ENCODE measurements at regions of chr9 and their contacts with region 1.

Region 1: DNA sequence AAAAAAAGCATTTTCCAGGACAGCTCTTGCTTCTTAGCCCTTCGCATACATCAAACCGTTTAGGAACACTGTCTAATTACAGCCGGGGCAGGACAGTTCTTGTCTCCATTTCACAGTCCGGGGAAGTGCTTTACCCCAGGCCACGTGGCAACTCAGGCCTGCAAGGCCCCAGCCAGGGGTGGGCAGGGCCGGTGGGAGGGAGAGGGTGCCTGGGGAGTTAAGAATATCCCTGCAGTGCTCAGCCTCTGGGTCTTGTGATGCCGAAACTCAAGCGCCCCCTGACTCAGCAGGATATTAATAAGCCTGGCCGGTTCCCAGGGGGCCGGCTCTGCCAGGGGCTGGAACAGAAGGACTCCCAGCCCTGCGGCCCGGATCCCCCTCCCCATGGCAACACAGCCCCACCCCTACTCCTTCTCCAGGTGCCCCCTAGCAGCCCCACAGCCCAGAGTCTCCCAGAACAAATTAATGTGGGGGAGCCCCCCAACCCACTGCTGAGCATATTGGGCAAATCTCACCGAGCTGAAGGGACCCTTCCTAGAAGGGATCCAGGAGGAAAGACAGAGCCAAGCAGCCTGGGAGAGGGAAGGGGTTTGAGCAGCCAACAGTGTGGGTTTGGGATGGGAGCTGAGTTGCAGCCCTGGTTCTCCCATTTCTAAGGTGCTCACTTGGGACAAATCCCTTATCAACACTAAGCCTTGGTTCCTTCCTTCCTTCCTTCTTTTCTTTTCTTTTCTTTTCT is 45.3 kb downstream of the PLPP7 start:
- DNase-seq: peak; percentile 64
- H3K4me3 ChIP-seq: no peak overlapping the region
- H3K27ac ChIP-seq: no peak overlapping the region
- H3K4me1 ChIP-seq: peaks cover 0 to 5% (median 0%) of the 10 kb centered on the region in 4 donors
- H3K27me3 ChIP-seq: no peaks in the 10 kb centered on the region
- CTCF ChIP-seq: no peak
- EP300 ChIP-seq: no peak
- POLR2A ChIP-seq: no peak

Region 2: DNA sequence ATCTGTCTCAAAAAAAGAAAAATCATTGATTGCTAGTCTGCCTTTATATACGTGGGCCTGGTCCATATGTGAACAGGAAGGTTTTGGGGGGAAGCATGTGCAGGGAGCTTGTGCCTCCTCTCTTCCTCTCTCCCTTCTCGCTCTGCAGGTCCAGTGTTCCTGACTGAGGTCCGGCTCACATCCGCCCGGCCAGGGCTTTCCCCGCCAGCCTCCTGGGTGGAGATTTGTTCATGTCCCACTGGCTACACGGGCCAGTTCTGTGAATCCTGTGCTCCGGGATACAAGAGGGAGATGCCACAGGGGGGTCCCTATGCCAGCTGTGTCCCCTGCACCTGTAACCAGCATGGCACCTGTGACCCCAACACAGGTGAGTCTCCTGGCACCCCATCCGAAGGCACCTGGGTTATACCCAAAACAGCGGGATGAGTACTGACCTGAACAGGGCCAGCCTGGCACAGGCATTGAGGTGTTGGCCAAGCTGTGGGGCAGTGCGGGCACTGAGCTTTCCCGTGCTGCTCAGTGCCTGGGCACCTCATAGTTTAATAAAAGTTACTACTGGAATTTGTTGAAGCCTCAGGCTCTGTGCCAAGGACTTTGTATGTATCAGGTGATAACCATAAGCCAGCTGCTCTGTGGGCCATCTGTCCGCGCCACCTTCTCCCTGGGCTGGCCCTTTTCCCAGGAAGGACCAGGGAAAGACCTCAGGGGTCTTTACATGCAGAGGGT is 277.9 kb before region 1 on chr9:
- intact Hi-C with region 1: loop called (anchors 1 kb)
- DNase-seq: no peak
- H3K4me3 ChIP-seq: no peak overlapping the region
- H3K27ac ChIP-seq: no peak overlapping the region
- H3K4me1 ChIP-seq: no peaks in the 10 kb centered on the region
- H3K27me3 ChIP-seq: peaks cover 0 to 9% (median 0%) of the 10 kb centered on the region in 3 donors
- CTCF ChIP-seq: no peak
- EP300 ChIP-seq: no peak
- POLR2A ChIP-seq: no peak

Region 3: DNA sequence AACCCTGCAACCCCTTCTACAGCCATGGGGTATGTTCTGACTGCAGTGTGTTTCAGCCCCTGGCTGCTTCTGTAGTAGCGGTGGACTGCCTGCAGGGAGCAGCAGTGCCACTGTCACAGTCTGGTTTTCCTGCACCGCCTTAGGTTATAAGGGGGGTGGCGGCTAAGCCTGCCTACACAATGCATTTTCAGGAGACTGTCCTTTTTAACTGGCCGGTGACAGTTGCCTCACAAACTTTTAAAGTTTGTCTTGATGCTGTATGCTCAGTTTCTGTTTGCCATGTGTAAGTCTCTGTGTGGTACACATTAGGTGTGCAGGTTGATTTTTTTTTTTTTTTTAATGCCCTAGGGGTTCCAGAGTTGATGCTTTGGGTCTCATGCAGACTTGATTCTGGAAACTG is 156.4 kb before region 1 on chr9:
- intact Hi-C with region 1: loop called (anchors 1 kb)
- DNase-seq: peak; percentile 70
- H3K4me3 ChIP-seq: no peak overlapping the region
- H3K27ac ChIP-seq: no peak overlapping the region
- H3K4me1 ChIP-seq: peaks cover 0 to 9% (median 0%) of the 10 kb centered on the region in 4 donors
- H3K27me3 ChIP-seq: no peaks in the 10 kb centered on the region
- CTCF ChIP-seq: peak; percentile 57 to 94 (median 80)
- EP300 ChIP-seq: no peak
- POLR2A ChIP-seq: no peak

Region 4: DNA sequence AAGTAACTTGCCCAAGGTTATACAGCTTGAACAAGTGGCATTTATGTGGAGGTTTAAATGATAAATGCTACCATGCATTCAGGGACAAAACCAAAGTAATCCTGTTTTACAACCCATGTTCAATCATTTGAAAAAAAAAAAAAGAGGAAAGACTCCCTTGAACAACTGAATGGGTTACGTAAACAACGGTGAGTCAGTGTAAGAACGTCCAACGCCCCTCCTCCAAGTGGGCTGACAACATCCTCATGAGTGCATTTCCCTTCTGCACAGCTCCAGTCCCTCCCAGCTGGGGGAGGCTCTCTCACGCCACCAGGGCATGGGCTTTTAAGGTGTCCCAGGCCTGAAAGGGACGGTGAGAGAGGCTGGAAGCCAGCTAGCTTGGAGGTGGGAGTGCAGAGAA is 300.5 kb after region 1 on chr9:
- intact Hi-C with region 1: no loop called
- DNase-seq: peak; percentile 94
- H3K4me3 ChIP-seq: no peak overlapping the region
- H3K27ac ChIP-seq: peak overlapping the region; percentile 54 to 76 (median 66)
- H3K4me1 ChIP-seq: peaks cover 0 to 18% (median 12%) of the 10 kb centered on the region in 4 donors
- H3K27me3 ChIP-seq: no peaks in the 10 kb centered on the region
- CTCF ChIP-seq: peak in 1 of 4 experiments; percentile 7
- EP300 ChIP-seq: peak in 1 of 4 donors; percentile 78
- POLR2A ChIP-seq: peak in 1 of 2 donors; percentile 39